Naive thymus-derived CD4-positive, alpha-beta T cell (primary cell): ENCODE measurements at regions of chr5 and their contacts with region 1.

Region 1: GRCh38 chr5:1737790-1738405 is 61.7 kb downstream of the MRPL36 start:
- DNase-seq: peak in 7 of 9 donors; percentile 15 to 64 (median 48)
- ATAC-seq: peak; percentile 64
- H3K4me3 ChIP-seq: no peak overlapping the region
- H3K4me3 Mint-ChIP-seq: no peak overlapping the region
- H3K27ac ChIP-seq: no peak overlapping the region
- H3K27ac Mint-ChIP-seq: peak overlapping the region in 1 of 9 donors; percentile 53
- H3K4me1 ChIP-seq: no peaks in the 10 kb centered on the region
- H3K4me1 Mint-ChIP-seq: no peaks in the 10 kb centered on the region
- H3K27me3 ChIP-seq: no peaks in the 10 kb centered on the region
- H3K27me3 Mint-ChIP-seq: peaks cover 19 to 38% (median 31%) of the 10 kb centered on the region in 5 donors

Region 2: DNA sequence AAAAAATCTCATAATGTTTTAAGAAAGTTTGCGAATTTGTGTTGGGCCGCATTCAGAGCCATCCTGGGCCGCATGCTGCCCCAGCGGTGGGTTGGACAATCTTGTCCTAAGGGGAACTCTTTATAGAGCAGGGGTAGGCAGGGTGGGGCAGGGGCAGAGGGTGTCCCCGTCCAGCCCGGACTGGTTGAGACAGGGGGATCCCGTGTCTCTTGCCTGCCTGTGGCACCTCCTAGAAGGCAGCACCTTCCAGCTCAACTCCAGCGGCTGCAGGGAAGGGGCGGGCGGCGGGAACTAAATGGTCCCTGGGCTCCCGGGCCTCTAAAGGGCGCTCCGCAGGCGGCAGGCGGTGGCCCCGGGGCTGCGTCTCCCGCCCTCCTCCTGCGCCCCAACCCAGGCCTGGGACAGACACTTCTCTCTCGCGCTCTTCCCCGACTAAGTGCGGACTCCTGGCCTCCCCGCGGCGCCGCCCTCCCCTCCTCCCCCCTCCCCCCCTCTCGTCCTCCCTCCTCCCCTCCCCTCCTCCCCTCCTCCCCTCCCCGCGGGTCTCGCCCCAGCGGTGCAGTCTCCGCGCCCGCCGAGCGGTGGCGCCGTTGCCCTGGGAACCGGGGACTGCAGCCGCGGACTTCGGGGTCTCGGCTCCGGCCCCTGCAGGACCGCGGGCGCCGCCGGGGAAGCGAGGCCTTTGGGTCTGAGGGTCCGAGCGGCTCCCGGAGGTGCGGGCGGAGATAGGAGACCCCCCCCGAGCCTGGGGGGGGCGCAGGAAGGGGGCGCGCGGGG is 70.9 kb before region 1 on chr5:
- CTCF ChIA-PET with region 1: no interaction called
- POLR2A ChIA-PET with region 1: no interaction called
- intact Hi-C with region 1: loop called in 1 of 2 experiments (anchors 5 kb)
- DNase-seq: peak in 8 of 9 donors; percentile 40 to 73 (median 52)
- ATAC-seq: peak; percentile 63
- H3K4me3 ChIP-seq: no peak overlapping the region
- H3K4me3 Mint-ChIP-seq: peak overlapping the region in 7 of 10 donors; percentile 2 to 77 (median 52)
- H3K27ac ChIP-seq: no peak overlapping the region
- H3K27ac Mint-ChIP-seq: no peak overlapping the region
- H3K4me1 ChIP-seq: peaks cover 0 to 4% of the 10 kb centered on the region in 2 donors
- H3K4me1 Mint-ChIP-seq: peaks cover 0 to 22% (median 14%) of the 10 kb centered on the region in 7 donors
- H3K27me3 ChIP-seq: peaks cover 12 to 14% of the 10 kb centered on the region in 2 donors
- H3K27me3 Mint-ChIP-seq: peaks cover 42 to 70% (median 65%) of the 10 kb centered on the region in 5 donors

Region 3: DNA sequence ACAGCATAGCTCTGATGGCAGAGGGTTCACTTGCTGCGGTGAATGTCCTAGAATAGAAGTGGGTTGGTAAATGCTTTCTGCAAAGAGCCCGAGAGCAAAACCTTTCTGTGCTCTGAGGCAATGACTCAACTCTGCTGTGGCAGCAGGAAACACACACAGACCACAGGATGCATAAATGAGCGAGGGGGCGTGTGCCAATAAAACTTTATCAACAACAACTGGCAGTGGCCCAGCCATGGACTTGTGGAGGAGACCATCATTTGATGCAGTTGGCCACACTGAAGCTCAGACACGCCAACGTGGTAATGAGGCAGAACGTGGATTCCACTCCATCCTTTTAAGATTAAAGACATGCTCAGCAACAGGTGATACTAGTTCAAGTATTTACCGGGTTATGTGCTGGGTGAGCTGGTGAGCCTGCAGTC is 55.0 kb after region 1 on chr5:
- CTCF ChIA-PET with region 1: interaction called, 5 read pairs
- POLR2A ChIA-PET with region 1: no interaction called
- intact Hi-C with region 1: loop called (anchors 2 to 5 kb)
- DNase-seq: peak; percentile 28 to 78 (median 72)
- ATAC-seq: peak; percentile 93
- H3K4me3 ChIP-seq: peak overlapping the region; percentile 43
- H3K4me3 Mint-ChIP-seq: peak overlapping the region; percentile 48 to 91 (median 70)
- H3K27ac ChIP-seq: peak overlapping the region; percentile 56
- H3K27ac Mint-ChIP-seq: peak overlapping the region; percentile 84 to 99 (median 95)
- H3K4me1 ChIP-seq: peaks cover 21% of the 10 kb centered on the region in 2 donors
- H3K4me1 Mint-ChIP-seq: peaks cover 26 to 68% (median 48%) of the 10 kb centered on the region in 7 donors
- H3K27me3 ChIP-seq: no peaks in the 10 kb centered on the region
- H3K27me3 Mint-ChIP-seq: no peaks in the 10 kb centered on the region

Region 4: GRCh38 chr5:2017540-2018389 is 279.9 kb after region 1 on chr5:
- CTCF ChIA-PET with region 1: no interaction called
- POLR2A ChIA-PET with region 1: no interaction called
- intact Hi-C with region 1: loop called in 1 of 2 experiments (anchors 1 kb)
- DNase-seq: peak in 4 of 9 donors; percentile 7 to 23 (median 21)
- ATAC-seq: no peak
- H3K4me3 ChIP-seq: no peak overlapping the region
- H3K4me3 Mint-ChIP-seq: no peak overlapping the region
- H3K27ac ChIP-seq: no peak overlapping the region
- H3K27ac Mint-ChIP-seq: no peak overlapping the region
- H3K4me1 ChIP-seq: no peaks in the 10 kb centered on the region
- H3K4me1 Mint-ChIP-seq: no peaks in the 10 kb centered on the region
- H3K27me3 ChIP-seq: no peaks in the 10 kb centered on the region
- H3K27me3 Mint-ChIP-seq: peaks cover 0 to 29% (median 11%) of the 10 kb centered on the region in 5 donors

Region 5: DNA sequence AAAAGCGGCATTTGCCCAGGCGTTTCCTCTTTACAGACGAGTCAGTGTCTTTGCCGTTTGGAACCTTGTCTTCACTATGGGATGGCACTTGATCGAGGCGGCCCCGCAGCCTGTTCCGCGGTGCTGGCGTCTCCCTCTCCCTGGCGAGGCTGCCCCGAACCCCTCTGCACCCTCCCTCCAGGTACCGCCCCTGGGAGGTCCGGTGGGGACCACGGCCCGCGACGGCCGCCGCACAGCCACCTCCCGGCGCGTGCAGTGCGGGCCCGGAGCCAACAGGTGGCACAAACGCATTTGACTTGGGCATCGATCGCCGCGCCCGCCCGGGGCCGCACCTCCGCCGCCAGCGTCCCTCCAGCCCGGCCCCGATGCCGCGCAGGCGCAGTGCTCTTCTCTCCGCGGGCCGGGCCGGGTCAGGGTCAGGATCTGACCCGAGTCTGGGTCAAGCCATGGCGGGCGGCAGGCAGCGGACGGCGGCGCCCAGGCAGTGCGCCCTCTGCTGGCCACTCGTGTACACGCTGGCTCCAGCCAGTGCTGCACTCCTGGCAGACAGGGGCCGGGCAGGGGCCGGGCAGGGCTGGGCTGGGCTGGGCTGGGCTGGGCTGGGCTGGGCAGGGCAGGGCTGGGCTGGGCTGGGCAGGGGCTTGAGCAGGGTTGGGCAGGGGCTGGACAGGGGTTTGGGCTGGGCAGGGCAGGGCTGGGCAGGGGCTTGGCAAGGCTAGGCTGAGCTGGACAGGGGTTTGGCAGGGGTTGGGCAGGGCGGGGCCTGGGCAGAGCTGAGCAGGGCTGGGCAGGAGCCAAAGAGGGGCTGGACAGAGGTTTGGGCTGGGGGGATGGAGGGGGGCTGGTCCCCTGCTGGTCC is 300.7 kb after region 1 on chr5:
- CTCF ChIA-PET with region 1: no interaction called
- POLR2A ChIA-PET with region 1: no interaction called
- intact Hi-C with region 1: loop called in 1 of 2 experiments (anchors 1 kb)
- DNase-seq: peak; percentile 26 to 73 (median 58)
- ATAC-seq: peak; percentile 87
- H3K4me3 ChIP-seq: peak overlapping the region; percentile 42
- H3K4me3 Mint-ChIP-seq: peak overlapping the region; percentile 44 to 77 (median 71)
- H3K27ac ChIP-seq: no peak overlapping the region
- H3K27ac Mint-ChIP-seq: no peak overlapping the region
- H3K4me1 ChIP-seq: no peaks in the 10 kb centered on the region
- H3K4me1 Mint-ChIP-seq: no peaks in the 10 kb centered on the region
- H3K27me3 ChIP-seq: peaks cover 0 to 8% of the 10 kb centered on the region in 2 donors
- H3K27me3 Mint-ChIP-seq: peaks cover 20 to 73% (median 53%) of the 10 kb centered on the region in 5 donors